ENCODE measurements at regions of chr4 and their contacts with region 1.

Region 1: GRCh38 chr4:74228691-74229640 is 71.0 kb downstream of the MTHFD2L start:
- DNase-seq: peak; percentile 75 to 79
- H3K4me3 ChIP-seq: no peak overlapping the region
- H3K27ac ChIP-seq: no peak overlapping the region
- H3K4me1 ChIP-seq: no peaks in the 10 kb centered on the region
- H3K27me3 ChIP-seq: no peaks in the 10 kb centered on the region
- CTCF ChIP-seq: peak; percentile 55 to 82 (median 68)
- POLR2A ChIP-seq: no peak

Region 2: DNA sequence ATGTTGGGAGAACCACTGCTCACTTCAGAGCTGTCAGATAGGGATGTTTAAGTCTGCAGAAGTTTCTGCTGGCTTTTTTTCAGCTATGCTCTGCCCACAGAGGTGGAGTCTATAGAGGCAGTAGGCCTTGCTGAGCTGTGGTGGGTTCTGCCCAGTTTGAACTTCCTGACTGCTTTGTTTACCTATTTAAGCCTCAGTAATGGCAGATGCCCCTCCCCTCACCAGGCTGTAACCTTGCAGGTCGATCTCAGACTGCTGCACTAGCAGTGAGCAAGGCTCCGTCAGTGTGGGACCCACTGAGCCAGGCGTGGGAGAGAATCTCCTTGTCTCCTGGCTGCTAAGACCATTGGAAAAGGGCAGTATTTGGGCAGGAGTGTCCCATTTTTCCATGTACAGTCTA is 710.6 kb before region 1 on chr4:
- intact Hi-C with region 1: no loop called
- DNase-seq: no peak
- H3K4me3 ChIP-seq: no peak overlapping the region
- H3K27ac ChIP-seq: no peak overlapping the region
- H3K4me1 ChIP-seq: no peaks in the 10 kb centered on the region
- H3K27me3 ChIP-seq: no peaks in the 10 kb centered on the region
- CTCF ChIP-seq: no peak
- POLR2A ChIP-seq: no peak

Region 3: GRCh38 chr4:74311696-74312313 is 82.8 kb after region 1 on chr4:
- intact Hi-C with region 1: loop called (anchors 5 kb)
- DNase-seq: no peak
- H3K4me3 ChIP-seq: no peak overlapping the region
- H3K27ac ChIP-seq: no peak overlapping the region
- H3K4me1 ChIP-seq: no peaks in the 10 kb centered on the region
- H3K27me3 ChIP-seq: no peaks in the 10 kb centered on the region
- CTCF ChIP-seq: peak in 5 of 6 experiments; percentile 17 to 67 (median 65)
- POLR2A ChIP-seq: no peak

Region 4: DNA sequence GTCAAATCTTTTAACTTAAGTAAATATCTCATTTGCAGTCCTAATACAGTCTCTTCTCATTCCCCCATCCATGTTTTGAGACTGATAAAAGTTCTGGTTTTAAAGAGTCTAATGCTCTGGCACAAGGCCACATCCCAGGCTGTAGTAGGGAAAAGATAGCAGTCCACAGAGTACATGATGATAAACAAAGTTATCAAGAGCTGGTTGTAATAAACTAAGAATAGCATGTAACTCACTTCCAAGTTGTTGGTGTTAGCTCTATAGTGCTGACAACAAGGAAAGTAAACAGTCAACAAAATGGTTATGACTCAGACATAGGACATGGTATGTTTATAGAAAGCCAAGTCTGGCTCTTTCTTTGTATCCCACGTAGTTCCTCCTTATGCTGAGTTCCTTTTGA is 194.1 kb after region 1 on chr4:
- intact Hi-C with region 1: no loop called
- DNase-seq: no peak
- H3K4me3 ChIP-seq: no peak overlapping the region
- H3K27ac ChIP-seq: no peak overlapping the region
- H3K4me1 ChIP-seq: no peaks in the 10 kb centered on the region
- H3K27me3 ChIP-seq: no peaks in the 10 kb centered on the region
- CTCF ChIP-seq: no peak
- POLR2A ChIP-seq: no peak